ENCODE measurements at regions of chr19 and their contacts with region 1.

Region 1: GRCh38 chr19:50724522-50725217 is 1.5 kb downstream of the CLEC11A start:
- DNase-seq: peak; percentile 99
- ATAC-seq: peak; percentile 89
- H3K4me3 ChIP-seq: peak overlapping the region; percentile 89 to 93
- H3K27ac ChIP-seq: peak overlapping the region; percentile 75
- H3K4me1 ChIP-seq: peaks cover 18 to 41% of the 10 kb centered on the region in 2 experiments; a peak in 3 of 4 replicates
- H3K27me3 ChIP-seq: no peaks in the 10 kb centered on the region
- CTCF ChIP-seq: peak; percentile 82 to 98 (median 91)
- POLR2A ChIP-seq: peak; percentile 62
- RAD21 ChIP-seq: peak; percentile 51

Region 2: DNA sequence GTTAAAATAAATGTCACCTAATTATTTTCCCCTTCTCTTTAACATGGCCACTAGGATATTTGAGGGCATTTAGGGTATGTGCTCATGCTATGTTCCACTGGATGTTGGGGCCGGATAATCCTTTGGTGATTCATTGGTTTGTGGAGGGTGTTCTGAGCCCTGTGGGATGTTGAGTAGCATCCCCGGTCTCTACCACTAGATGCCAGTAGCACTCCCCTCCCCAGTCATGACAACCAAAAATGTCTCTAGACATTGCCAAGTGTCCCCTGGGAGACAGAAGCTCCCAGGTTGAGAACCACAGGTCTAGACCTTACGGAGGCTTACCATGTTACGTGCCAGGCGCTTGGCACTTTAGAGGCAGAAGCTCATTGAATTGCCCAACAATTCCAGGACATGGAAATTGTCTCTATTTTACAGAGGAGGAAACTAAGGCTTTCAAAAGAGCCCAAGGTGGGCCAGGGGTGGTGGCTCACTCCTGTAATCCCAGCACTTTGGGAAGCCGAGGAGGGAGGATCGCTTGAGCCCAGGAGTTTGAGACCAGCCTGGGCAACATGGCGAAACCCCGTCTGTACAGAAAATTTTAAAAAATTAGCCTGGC is 19.1 kb before region 1 on chr19:
- CTCF ChIA-PET with region 1: interaction called, 45 read pairs
- POLR2A ChIA-PET with region 1: interaction called, 4 read pairs
- RAD21 ChIA-PET with region 1: interaction called, 3 read pairs
- intact Hi-C with region 1: no loop called
- DNase-seq: peak; percentile 56
- ATAC-seq: peak; percentile 87
- H3K4me3 ChIP-seq: no peak overlapping the region
- H3K27ac ChIP-seq: no peak overlapping the region
- H3K4me1 ChIP-seq: peaks cover 0 to 2% of the 10 kb centered on the region in 2 experiments; a peak in 2 of 4 replicates
- H3K27me3 ChIP-seq: no peaks in the 10 kb centered on the region; the same call in 1 of the 2 replicates
- CTCF ChIP-seq: peak; percentile 79 to 92 (median 85)
- POLR2A ChIP-seq: no peak
- RAD21 ChIP-seq: peak; percentile 87

Region 3: DNA sequence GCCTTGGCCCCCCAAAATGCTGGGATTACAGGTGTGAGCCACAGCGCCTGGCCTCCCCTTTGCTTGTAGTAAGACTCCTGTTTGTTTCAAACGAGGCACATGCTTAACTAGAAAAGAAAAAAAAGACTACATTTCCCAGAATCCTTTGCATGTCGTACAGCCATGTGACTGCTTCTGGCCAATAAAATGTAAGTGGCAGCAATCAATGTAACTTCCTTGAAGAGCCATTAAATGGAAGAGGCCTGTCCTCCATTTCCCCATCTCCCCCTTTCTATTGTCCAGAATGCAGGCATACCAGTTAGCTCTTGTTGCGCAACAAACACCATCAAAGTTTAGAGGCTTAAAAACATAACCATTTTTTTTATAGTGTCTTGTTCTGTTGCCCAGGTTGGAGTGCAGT is 35.2 kb after region 1 on chr19:
- CTCF ChIA-PET with region 1: interaction called, 6 read pairs
- POLR2A ChIA-PET with region 1: no interaction called
- RAD21 ChIA-PET with region 1: interaction called in 1 of 2 experiments, 10 read pairs
- intact Hi-C with region 1: no loop called
- DNase-seq: peak; percentile 69
- ATAC-seq: peak; percentile 77
- H3K4me3 ChIP-seq: no peak overlapping the region
- H3K27ac ChIP-seq: no peak overlapping the region
- H3K4me1 ChIP-seq: peaks cover 0 to 11% of the 10 kb centered on the region in 2 experiments; a peak in 1 of 4 replicates
- H3K27me3 ChIP-seq: no peaks in the 10 kb centered on the region
- CTCF ChIP-seq: no peak
- POLR2A ChIP-seq: no peak
- RAD21 ChIP-seq: no peak

Region 4: DNA sequence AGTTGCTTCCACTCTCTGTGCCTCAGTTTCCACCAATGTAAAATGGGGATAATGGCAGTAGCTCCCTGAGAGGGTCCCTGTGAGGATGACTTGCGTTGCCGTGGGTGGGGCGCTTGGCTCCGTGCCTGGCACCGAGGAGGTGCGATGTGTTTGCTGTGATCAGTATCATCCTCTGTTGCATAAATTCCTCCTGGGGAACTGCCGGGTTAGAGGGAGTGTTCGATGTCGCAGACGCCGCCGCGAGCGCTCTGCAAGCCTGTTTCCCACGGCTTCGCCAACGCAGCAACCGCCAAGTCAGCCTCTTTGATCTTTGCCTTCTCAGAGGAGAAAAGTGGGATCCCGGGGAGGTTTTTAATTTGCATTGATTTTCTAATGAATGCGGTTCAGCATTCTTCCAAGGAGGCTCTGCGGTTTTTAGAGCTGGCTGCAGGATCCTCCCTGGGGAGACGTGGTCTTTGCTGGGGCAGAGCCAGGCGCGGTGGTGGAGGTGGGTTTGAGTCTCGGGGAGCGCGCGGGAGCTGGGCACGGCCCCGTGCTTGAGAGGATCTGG is 53.2 kb after region 1 on chr19:
- CTCF ChIA-PET with region 1: interaction called, 10 read pairs
- POLR2A ChIA-PET with region 1: interaction called, 5 read pairs
- RAD21 ChIA-PET with region 1: interaction called, 4 to 8 read pairs
- intact Hi-C with region 1: loop called (anchors 5 kb)
- DNase-seq: no peak
- ATAC-seq: peak; percentile 67
- H3K4me3 ChIP-seq: peak overlapping the region; percentile 24 to 43
- H3K27ac ChIP-seq: no peak overlapping the region
- H3K4me1 ChIP-seq: peaks cover 6 to 17% of the 10 kb centered on the region in 2 experiments; a peak in 3 of 4 replicates
- H3K27me3 ChIP-seq: peaks cover 14% of the 10 kb centered on the region; the same call in 1 of the 2 replicates
- CTCF ChIP-seq: no peak
- POLR2A ChIP-seq: no peak
- RAD21 ChIP-seq: no peak